ENCODE measurements at regions of chr5 and their contacts with region 1.

Region 1: GRCh38 chr5:82165740-82166530 is 112.2 kb downstream of the RPS23 start:
- DNase-seq: peak; percentile 86
- H3K4me3 ChIP-seq: no peak overlapping the region
- H3K27ac ChIP-seq: no peak overlapping the region
- H3K4me1 ChIP-seq: peaks cover 23% of the 10 kb centered on the region
- H3K27me3 ChIP-seq: no peaks in the 10 kb centered on the region
- CTCF ChIP-seq: peak; percentile 88 to 92

Region 2: GRCh38 chr5:81301271-81302015 is 864.5 kb before region 1 on chr5 and contains the start of gene ZCCHC9:
- CTCF ChIA-PET with region 1: interaction called, 4 read pairs
- dilution Hi-C with region 1: no loop called
- in situ Hi-C with region 1: no loop called
- intact Hi-C with region 1: loop called (anchors 5 kb)
- DNase-seq: peak; percentile 89
- H3K4me3 ChIP-seq: peak within 1 kb of the TSS; percentile 75 to 96 (median 95)
- H3K27ac ChIP-seq: peak within 1 kb of the TSS; percentile 92
- H3K4me1 ChIP-seq: peaks cover 26% of the 10 kb centered on the region
- H3K27me3 ChIP-seq: no peaks in the 10 kb centered on the region
- CTCF ChIP-seq: peak in 1 of 2 donors; percentile 35
- total RNA-seq, gene ZCCHC9: 13.7 to 28.1 TPM

Region 3: GRCh38 chr5:81506900-81507588 is 658.9 kb before region 1 on chr5:
- CTCF ChIA-PET with region 1: interaction called, 4 read pairs
- dilution Hi-C with region 1: no loop called
- in situ Hi-C with region 1: loop called (anchors 10 kb)
- intact Hi-C with region 1: loop called (anchors 1 kb)
- DNase-seq: peak; percentile 66
- H3K4me3 ChIP-seq: no peak overlapping the region
- H3K27ac ChIP-seq: no peak overlapping the region
- H3K4me1 ChIP-seq: no peaks in the 10 kb centered on the region
- H3K27me3 ChIP-seq: no peaks in the 10 kb centered on the region
- CTCF ChIP-seq: peak; percentile 87 to 88

Region 4: GRCh38 chr5:81751009-81751835 is 414.7 kb before region 1 on chr5 and contains the start of gene SSBP2:
- CTCF ChIA-PET with region 1: no interaction called
- dilution Hi-C with region 1: no loop called
- in situ Hi-C with region 1: loop called in 1 of 2 experiments (anchors 25 kb)
- intact Hi-C with region 1: loop called (anchors 1 kb)
- DNase-seq: peak; percentile 99
- H3K4me3 ChIP-seq: peak within 1 kb of the TSS; percentile 82 to 96 (median 90)
- H3K27ac ChIP-seq: peak within 1 kb of the TSS; percentile 81
- H3K4me1 ChIP-seq: peaks cover 36% of the 10 kb centered on the region
- H3K27me3 ChIP-seq: no peaks in the 10 kb centered on the region
- CTCF ChIP-seq: no peak
- total RNA-seq, gene SSBP2: 24.8 to 40.8 TPM

Region 5: DNA sequence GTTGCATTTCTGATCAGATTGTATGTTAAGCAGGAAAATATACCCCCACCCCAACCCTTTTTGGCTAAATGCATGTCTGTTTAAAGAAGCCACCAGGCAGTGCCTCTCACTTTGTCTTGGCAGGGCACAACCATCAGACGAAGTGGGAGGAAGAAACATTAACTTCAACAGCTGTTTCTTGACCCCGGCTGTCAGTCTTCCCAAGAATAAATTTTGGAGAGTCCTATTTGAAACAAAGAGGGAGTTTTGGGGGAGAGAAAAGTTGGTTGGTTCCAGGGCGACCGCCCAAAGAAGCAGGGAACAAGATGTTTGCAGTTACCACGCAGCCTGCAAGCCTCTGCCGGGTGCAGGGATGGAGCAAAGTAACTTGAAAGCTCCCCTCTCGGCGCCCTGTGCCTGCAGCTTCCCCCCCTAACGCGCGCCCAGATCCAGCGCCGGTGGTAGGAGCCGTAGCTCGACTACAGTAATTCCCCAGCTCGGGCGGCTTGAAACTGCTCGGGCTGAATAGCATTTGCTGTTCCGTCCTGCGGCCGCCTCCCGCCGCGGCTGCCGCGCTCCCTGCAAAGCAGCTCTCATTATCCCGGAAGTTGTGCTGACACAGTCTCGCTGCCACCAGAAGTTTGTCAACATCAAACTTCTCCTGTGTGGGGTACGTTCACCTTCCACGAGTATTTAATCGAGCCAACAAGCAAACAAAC is 314.3 kb before region 1 on chr5:
- CTCF ChIA-PET with region 1: interaction called, 3 read pairs
- dilution Hi-C with region 1: no loop called
- in situ Hi-C with region 1: no loop called
- intact Hi-C with region 1: loop called (anchors 2 kb)
- DNase-seq: peak; percentile 84
- H3K4me3 ChIP-seq: peak overlapping the region; percentile 30 to 36 (median 36)
- H3K27ac ChIP-seq: no peak overlapping the region
- H3K4me1 ChIP-seq: peaks cover 44% of the 10 kb centered on the region
- H3K27me3 ChIP-seq: no peaks in the 10 kb centered on the region
- CTCF ChIP-seq: no peak

Region 6: GRCh38 chr5:82107267-82107666 is 58.7 kb before region 1 on chr5:
- CTCF ChIA-PET with region 1: interaction called, 18 read pairs
- dilution Hi-C with region 1: no loop called
- in situ Hi-C with region 1: no loop called
- intact Hi-C with region 1: loop called (anchors 1 kb)
- DNase-seq: no peak
- H3K4me3 ChIP-seq: no peak overlapping the region
- H3K27ac ChIP-seq: no peak overlapping the region
- H3K4me1 ChIP-seq: peaks cover 11% of the 10 kb centered on the region
- H3K27me3 ChIP-seq: no peaks in the 10 kb centered on the region
- CTCF ChIP-seq: peak; percentile 18 to 52

Region 7: DNA sequence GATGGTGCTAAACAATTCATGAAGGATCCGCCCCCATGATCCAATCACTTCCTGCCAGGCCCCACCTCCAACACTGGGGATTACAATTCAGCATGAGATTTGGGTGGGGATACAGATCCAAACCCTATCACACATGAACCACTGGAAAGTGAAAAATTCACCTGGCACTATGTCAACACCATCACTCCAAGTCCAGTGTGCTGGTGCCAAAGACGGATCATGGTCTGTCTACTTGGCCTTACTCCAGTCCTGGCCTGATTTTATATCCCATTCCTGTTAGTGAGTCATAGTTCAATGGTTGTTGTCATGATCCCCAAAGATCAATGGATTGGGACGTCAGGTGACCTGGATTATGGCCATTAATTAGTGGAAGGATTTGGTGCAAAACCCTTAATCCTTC is 259.7 kb after region 1 on chr5:
- CTCF ChIA-PET with region 1: no interaction called
- dilution Hi-C with region 1: no loop called
- in situ Hi-C with region 1: no loop called
- intact Hi-C with region 1: no loop called
- DNase-seq: no peak
- H3K4me3 ChIP-seq: no peak overlapping the region
- H3K27ac ChIP-seq: no peak overlapping the region
- H3K4me1 ChIP-seq: peaks cover 9% of the 10 kb centered on the region
- H3K27me3 ChIP-seq: no peaks in the 10 kb centered on the region
- CTCF ChIP-seq: no peak

Region 8: GRCh38 chr5:82719368-82719767 is 553.4 kb after region 1 on chr5:
- CTCF ChIA-PET with region 1: no interaction called
- dilution Hi-C with region 1: no loop called
- in situ Hi-C with region 1: no loop called
- intact Hi-C with region 1: no loop called
- DNase-seq: no peak
- H3K4me3 ChIP-seq: no peak overlapping the region
- H3K27ac ChIP-seq: no peak overlapping the region
- H3K4me1 ChIP-seq: no peaks in the 10 kb centered on the region
- H3K27me3 ChIP-seq: no peaks in the 10 kb centered on the region
- CTCF ChIP-seq: no peak